ENCODE measurements at regions of chr15 and their contacts with region 1.

Region 1: GRCh38 chr15:75367913-75368688 is at the start of gene MAN2C1:
- DNase-seq: peak; percentile 97
- H3K4me3 ChIP-seq: peak within 1 kb of the TSS; percentile 95
- H3K27ac ChIP-seq: peak within 1 kb of the TSS; percentile 98
- H3K4me1 ChIP-seq: peaks cover 13% of the 10 kb centered on the region
- H3K27me3 ChIP-seq: no peaks in the 10 kb centered on the region
- CTCF ChIP-seq: peak; percentile 94
- total RNA-seq, gene MAN2C1: 169 and 205 TPM in 2 replicates

Region 2: GRCh38 chr15:75335705-75336355 is 32.3 kb before region 1 on chr15 and contains the start of gene COMMD4:
- CTCF ChIA-PET with region 1: interaction called, 11 read pairs
- POLR2A ChIA-PET with region 1: no interaction called
- intact Hi-C with region 1: no loop called
- DNase-seq: peak; percentile 97
- H3K4me3 ChIP-seq: peak within 1 kb of the TSS; percentile 75
- H3K27ac ChIP-seq: peak within 1 kb of the TSS; percentile 76
- H3K4me1 ChIP-seq: peaks cover 12% of the 10 kb centered on the region
- H3K27me3 ChIP-seq: no peaks in the 10 kb centered on the region
- CTCF ChIP-seq: no peak
- total RNA-seq, gene COMMD4: 109 and 126 TPM in 2 replicates

Region 3: DNA sequence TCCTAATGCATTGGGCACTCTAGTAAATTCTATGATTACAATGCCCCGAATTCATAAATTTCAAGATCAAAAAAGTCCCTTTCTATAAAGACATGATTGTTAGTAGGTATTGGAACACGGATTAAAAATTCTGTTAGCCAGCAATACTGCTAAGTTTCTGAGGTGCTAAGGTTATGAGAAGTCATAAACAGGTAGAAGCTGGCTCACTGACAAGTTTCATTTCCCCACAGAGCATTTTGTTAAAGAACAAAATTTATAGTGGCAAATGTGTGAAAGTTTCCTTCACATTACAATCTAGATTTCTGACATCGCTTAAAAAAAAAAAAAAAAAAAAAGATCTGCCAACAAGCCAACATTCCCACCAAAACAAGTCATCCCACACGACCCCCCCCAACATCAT is 12.7 kb after region 1 on chr15:
- CTCF ChIA-PET with region 1: no interaction called
- POLR2A ChIA-PET with region 1: no interaction called
- intact Hi-C with region 1: no loop called
- DNase-seq: no peak
- H3K4me3 ChIP-seq: no peak overlapping the region
- H3K27ac ChIP-seq: no peak overlapping the region
- H3K4me1 ChIP-seq: no peaks in the 10 kb centered on the region
- H3K27me3 ChIP-seq: no peaks in the 10 kb centered on the region
- CTCF ChIP-seq: no peak

Region 4: DNA sequence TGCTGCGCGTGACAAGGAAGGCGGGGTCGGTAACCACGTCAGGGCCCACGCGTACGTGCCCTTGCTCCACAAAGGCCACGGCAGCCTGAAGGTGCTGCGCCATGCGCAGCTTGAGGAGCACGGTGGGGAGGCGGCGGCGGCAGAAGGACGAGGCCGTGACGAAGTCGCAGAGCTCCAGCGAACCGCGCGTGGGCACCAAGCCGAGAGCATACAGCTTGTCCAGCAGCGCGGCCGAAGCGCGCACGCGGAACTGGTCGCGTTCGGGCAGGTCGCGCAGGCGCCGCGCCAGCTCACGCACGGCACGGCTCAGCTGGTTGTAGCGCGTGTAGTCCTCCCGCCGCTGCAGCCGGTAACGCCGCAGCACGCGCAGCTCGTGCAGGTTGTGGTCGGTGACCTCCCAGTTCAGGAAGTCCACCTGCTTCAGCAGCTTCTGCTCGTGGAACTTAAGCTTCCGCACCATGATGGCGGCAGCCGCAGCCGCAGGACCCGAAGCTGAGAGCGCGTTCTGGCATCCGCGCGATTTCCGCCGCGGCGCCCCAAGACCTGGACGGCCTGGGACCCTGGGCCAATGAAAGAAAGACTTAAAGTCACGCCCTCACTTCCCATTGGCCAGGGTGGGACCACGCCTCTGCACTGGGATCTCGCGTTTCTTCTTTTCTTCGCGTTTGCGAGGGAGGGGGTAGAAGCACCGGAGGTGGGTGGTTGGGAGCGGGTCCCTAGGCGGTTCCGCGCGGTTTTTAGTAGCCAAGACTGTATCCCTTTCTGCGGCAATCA is 271.8 kb after region 1 on chr15 and contains the start of gene IMP3:
- CTCF ChIA-PET with region 1: interaction called, 13 read pairs
- POLR2A ChIA-PET with region 1: no interaction called
- intact Hi-C with region 1: loop called (anchors 1 kb)
- DNase-seq: peak; percentile 99
- H3K4me3 ChIP-seq: peak within 1 kb of the TSS; percentile 75
- H3K27ac ChIP-seq: peak within 1 kb of the TSS; percentile 88
- H3K4me1 ChIP-seq: peaks cover 15% of the 10 kb centered on the region
- H3K27me3 ChIP-seq: no peaks in the 10 kb centered on the region
- CTCF ChIP-seq: no peak
- total RNA-seq, gene IMP3: 76.5 and 84.5 TPM in 2 replicates

Measured in A673 (cell line).